ENCODE measurements at regions of chr14 and their contacts with region 1.

Region 1: GRCh38 chr14:105490572-105491366 is at the start of gene TEDC1:
- DNase-seq: peak; percentile 100
- H3K4me3 ChIP-seq: peak within 1 kb of the TSS; percentile 63 to 65
- H3K27ac ChIP-seq: peak within 1 kb of the TSS; percentile 97 to 98
- H3K4me1 ChIP-seq: peaks cover 0 to 67% (median 47%) of the 10 kb centered on the region in 4 donors
- H3K27me3 ChIP-seq: no peaks in the 10 kb centered on the region
- CTCF ChIP-seq: peak; percentile 72 to 96

Region 2: DNA sequence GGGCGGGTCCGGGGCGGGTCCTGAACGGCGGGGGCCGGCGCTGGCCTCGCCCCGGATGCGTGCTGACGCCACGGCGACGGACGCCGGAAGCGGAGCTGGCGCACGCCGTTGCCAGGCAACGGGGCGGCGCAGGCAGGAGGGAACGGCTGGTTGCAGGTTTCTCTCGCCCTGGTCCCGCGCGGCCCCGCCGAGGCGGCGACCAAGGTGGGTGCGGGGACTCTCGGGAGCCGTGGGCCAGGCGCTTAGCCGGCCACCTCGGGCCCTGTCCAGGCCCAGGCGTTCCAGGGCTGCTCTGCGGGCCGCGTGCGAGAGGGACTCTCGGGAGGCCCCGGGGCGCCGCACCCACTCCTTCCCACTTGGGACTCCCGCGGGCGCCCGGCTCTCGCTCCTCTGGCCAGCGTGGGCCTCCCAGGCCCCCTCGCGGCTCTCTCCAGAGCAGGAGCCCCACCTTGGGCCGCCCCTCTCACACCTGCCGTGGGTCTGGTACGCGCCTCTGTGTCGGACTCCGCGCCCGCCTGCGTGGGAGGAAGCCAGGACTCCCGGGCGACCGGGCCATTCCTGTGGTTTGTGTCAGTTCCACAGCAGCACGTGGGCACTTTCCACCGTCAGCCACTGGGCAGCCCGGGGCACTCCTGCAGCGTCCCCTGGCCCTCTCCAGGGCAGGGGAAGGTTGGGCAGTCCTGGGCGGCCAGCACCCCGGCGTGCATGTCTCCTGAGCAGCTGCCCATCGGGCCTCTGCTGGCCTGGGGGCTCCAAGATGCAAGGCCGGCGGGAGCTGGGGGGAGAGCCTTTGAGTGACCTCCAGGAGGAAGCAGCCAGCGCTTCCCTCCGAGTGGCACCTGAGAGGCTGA is 504.9 kb before region 1 on chr14 and contains the start of gene CLBA1:
- intact Hi-C with region 1: loop called (anchors 10 kb)
- DNase-seq: peak; percentile 78 to 93
- H3K4me3 ChIP-seq: peak within 1 kb of the TSS; percentile 76 to 83
- H3K27ac ChIP-seq: peak within 1 kb of the TSS; percentile 76 to 82
- H3K4me1 ChIP-seq: peaks cover 0 to 18% (median 9%) of the 10 kb centered on the region in 4 donors
- H3K27me3 ChIP-seq: no peaks in the 10 kb centered on the region
- CTCF ChIP-seq: no peak

Region 3: GRCh38 chr14:105255021-105255507 is 235.7 kb before region 1 on chr14:
- intact Hi-C with region 1: no loop called
- DNase-seq: peak in 1 of 2 donors; percentile 55
- H3K4me3 ChIP-seq: no peak overlapping the region
- H3K27ac ChIP-seq: no peak overlapping the region
- H3K4me1 ChIP-seq: peaks cover 0 to under 1% (median under 1%) of the 10 kb centered on the region in 4 donors
- H3K27me3 ChIP-seq: no peaks in the 10 kb centered on the region
- CTCF ChIP-seq: no peak

Region 4: GRCh38 chr14:105300792-105301533 is 189.8 kb before region 1 on chr14 and contains the start of gene BRF1:
- intact Hi-C with region 1: loop called (anchors 10 kb)
- DNase-seq: peak; percentile 97 to 98
- H3K4me3 ChIP-seq: peak within 1 kb of the TSS; percentile 60 to 69
- H3K27ac ChIP-seq: peak within 1 kb of the TSS; percentile 85 to 87
- H3K4me1 ChIP-seq: peaks cover 0 to 23% (median 15%) of the 10 kb centered on the region in 4 donors
- H3K27me3 ChIP-seq: no peaks in the 10 kb centered on the region
- CTCF ChIP-seq: no peak

Region 5: GRCh38 chr14:105366386-105367074 is 124.2 kb before region 1 on chr14:
- intact Hi-C with region 1: loop called (anchors 2 kb)
- DNase-seq: no peak
- H3K4me3 ChIP-seq: no peak overlapping the region
- H3K27ac ChIP-seq: no peak overlapping the region
- H3K4me1 ChIP-seq: peaks cover 0 to 11% (median 3%) of the 10 kb centered on the region in 4 donors
- H3K27me3 ChIP-seq: no peaks in the 10 kb centered on the region
- CTCF ChIP-seq: no peak

Region 6: GRCh38 chr14:105414456-105415371 is 76.1 kb before region 1 on chr14:
- intact Hi-C with region 1: loop called (anchors 2 kb)
- DNase-seq: peak; percentile 74 to 88
- H3K4me3 ChIP-seq: peak overlapping the region; percentile 54 to 64
- H3K27ac ChIP-seq: peak overlapping the region; percentile 64 to 70
- H3K4me1 ChIP-seq: peaks cover 0 to 39% (median 33%) of the 10 kb centered on the region in 4 donors
- H3K27me3 ChIP-seq: peaks cover 0 to 34% of the 10 kb centered on the region in 2 donors
- CTCF ChIP-seq: peak; percentile 76 to 82

Region 7: GRCh38 chr14:105448706-105449111 is 42.1 kb before region 1 on chr14:
- intact Hi-C with region 1: loop called (anchors 2 kb)
- DNase-seq: peak; percentile 59 to 88
- H3K4me3 ChIP-seq: no peak overlapping the region
- H3K27ac ChIP-seq: peak overlapping the region; percentile 10 to 71
- H3K4me1 ChIP-seq: peaks cover 0 to 16% (median 12%) of the 10 kb centered on the region in 4 donors
- H3K27me3 ChIP-seq: no peaks in the 10 kb centered on the region
- CTCF ChIP-seq: peak; percentile 93 to 98

Region 8: GRCh38 chr14:105527661-105528581 is 37.2 kb after region 1 on chr14:
- intact Hi-C with region 1: loop called (anchors 5 kb)
- DNase-seq: peak; percentile 64 to 86
- H3K4me3 ChIP-seq: peak overlapping the region; percentile 54 to 67
- H3K27ac ChIP-seq: peak overlapping the region; percentile 42 to 60
- H3K4me1 ChIP-seq: peaks cover 0 to 39% (median 33%) of the 10 kb centered on the region in 4 donors
- H3K27me3 ChIP-seq: peaks cover 0 to 49% of the 10 kb centered on the region in 2 donors
- CTCF ChIP-seq: peak; percentile 87 to 92